Left ventricle myocardium superior (tissue), 1 donor: ENCODE measurements at regions of chr12 and their contacts with region 1.

Region 1: GRCh38 chr12:53287741-53288216 is 7.6 kb upstream of the PFDN5 start:
- DNase-seq: peak; percentile 78
- ATAC-seq: peak; percentile 85

Region 2: GRCh38 chr12:53213348-53213747 is 74.4 kb before region 1 on chr12:
- intact Hi-C with region 1: loop called (anchors 5 kb)
- DNase-seq: peak; percentile 93
- ATAC-seq: peak; percentile 77

Region 3: GRCh38 chr12:53431187-53431586 is 143.4 kb after region 1 on chr12:
- intact Hi-C with region 1: no loop called
- DNase-seq: no peak
- ATAC-seq: no peak